ENCODE measurements at regions of chr19 and their contacts with region 1.

Region 1: DNA sequence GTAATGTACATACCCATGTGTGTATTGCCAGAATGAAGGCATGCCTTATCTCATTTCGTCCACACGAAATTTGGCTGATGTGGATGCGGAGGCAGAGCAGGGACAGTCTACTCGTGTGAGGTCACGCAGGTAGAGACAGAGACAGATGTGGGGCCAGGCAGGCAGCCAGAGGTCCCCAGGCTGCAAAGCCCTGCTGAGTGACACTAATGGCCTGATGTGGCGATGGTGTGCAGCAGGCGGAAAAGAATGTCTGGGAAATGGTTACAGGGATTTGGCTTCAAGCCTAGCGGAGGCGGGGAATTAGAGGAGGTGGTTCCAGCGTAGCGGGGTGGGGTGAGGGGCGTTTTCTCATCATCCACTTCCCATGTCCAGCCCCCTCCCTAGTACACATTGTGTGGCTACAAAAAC is 4.2 kb upstream of the IZUMO2 start:
- DNase-seq: peak; percentile 73 to 82
- H3K4me3 ChIP-seq: no peak overlapping the region
- H3K27ac ChIP-seq: peak overlapping the region; percentile 57
- H3K4me1 ChIP-seq: peaks cover 65% of the 10 kb centered on the region
- H3K27me3 ChIP-seq: no peaks in the 10 kb centered on the region
- CTCF ChIP-seq: no peak

Region 2: GRCh38 chr19:50147462-50148423 is 19.6 kb before region 1 on chr19:
- CTCF ChIA-PET with region 1: interaction called, 15 read pairs
- POLR2A ChIA-PET with region 1: no interaction called
- intact Hi-C with region 1: no loop called
- DNase-seq: peak; percentile 86
- H3K4me3 ChIP-seq: peak overlapping the region; percentile 66
- H3K27ac ChIP-seq: 0 out of 2 replicates have a peak overlapping the region, but pooled peaks have one; percentile 21
- H3K4me1 ChIP-seq: no peaks in the 10 kb centered on the region
- H3K27me3 ChIP-seq: peaks cover 20% of the 10 kb centered on the region; the same call in 1 of the 2 replicates
- CTCF ChIP-seq: peak; percentile 89

Region 3: GRCh38 chr19:50203281-50204080 is 36.2 kb after region 1 on chr19 and contains the start of gene MYH14:
- CTCF ChIA-PET with region 1: no interaction called
- POLR2A ChIA-PET with region 1: interaction called, 8 read pairs
- intact Hi-C with region 1: loop called (anchors 1 kb)
- DNase-seq: peak; percentile 92 to 98
- H3K4me3 ChIP-seq: peak within 1 kb of the TSS; percentile 82
- H3K27ac ChIP-seq: peak within 1 kb of the TSS; percentile 97
- H3K4me1 ChIP-seq: peaks cover 33% of the 10 kb centered on the region
- H3K27me3 ChIP-seq: no peaks in the 10 kb centered on the region
- CTCF ChIP-seq: no peak
- total RNA-seq, gene MYH14: 115 and 169 TPM in 2 replicates

Region 4: GRCh38 chr19:50258918-50259372 is 91.6 kb after region 1 on chr19:
- CTCF ChIA-PET with region 1: no interaction called
- POLR2A ChIA-PET with region 1: no interaction called
- intact Hi-C with region 1: loop called (anchors 1 kb)
- DNase-seq: peak in 1 of 2 experiments; percentile 37
- H3K4me3 ChIP-seq: no peak overlapping the region
- H3K27ac ChIP-seq: no peak overlapping the region
- H3K4me1 ChIP-seq: no peaks in the 10 kb centered on the region
- H3K27me3 ChIP-seq: no peaks in the 10 kb centered on the region
- CTCF ChIP-seq: peak; percentile 95